ENCODE measurements at regions of chr5 and their contacts with region 1.

Region 1: DNA sequence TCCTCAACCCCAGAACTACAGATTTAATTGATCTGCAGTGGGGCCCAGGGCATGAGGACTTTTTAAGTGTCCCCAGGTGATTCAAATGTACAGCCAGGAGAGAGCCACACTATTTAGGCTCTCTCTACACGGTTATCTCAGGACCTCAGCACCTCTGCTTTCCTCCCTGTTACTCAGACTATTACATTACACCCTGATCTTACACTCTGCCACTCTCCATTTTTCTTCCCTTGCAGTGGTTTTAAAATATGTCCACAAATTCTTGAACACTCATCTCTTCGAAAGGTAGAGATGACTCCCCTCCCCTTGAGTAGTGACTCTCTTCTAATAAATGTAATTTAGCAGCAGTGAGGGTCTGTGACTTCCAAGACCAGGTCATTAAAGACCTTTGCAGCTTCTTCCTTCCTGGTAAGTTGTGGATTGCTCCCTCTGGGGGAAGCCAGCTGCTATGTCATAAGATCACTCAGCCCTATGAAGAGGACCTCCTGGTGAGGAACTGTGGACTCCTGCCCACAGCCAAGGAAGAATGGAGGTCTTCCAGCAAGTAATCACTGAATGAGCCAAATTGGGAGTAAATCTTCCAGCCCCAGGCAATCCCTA is 87.5 kb upstream of the SSBP2 start:
- DNase-seq: no peak
- H3K4me3 ChIP-seq: no peak overlapping the region
- H3K27ac ChIP-seq: no peak overlapping the region
- H3K4me1 ChIP-seq: peaks cover 3% of the 10 kb centered on the region
- H3K27me3 ChIP-seq: no peaks in the 10 kb centered on the region
- CTCF ChIP-seq: peak; percentile 40 to 69

Region 2: GRCh38 chr5:81425569-81425968 is 412.8 kb before region 1 on chr5:
- CTCF ChIA-PET with region 1: interaction called, 7 read pairs
- dilution Hi-C with region 1: no loop called
- in situ Hi-C with region 1: no loop called
- intact Hi-C with region 1: loop called (anchors 5 kb)
- DNase-seq: peak; percentile 27
- H3K4me3 ChIP-seq: no peak overlapping the region
- H3K27ac ChIP-seq: no peak overlapping the region
- H3K4me1 ChIP-seq: peaks cover 7% of the 10 kb centered on the region
- H3K27me3 ChIP-seq: no peaks in the 10 kb centered on the region
- CTCF ChIP-seq: peak; percentile 44 to 48

Region 3: DNA sequence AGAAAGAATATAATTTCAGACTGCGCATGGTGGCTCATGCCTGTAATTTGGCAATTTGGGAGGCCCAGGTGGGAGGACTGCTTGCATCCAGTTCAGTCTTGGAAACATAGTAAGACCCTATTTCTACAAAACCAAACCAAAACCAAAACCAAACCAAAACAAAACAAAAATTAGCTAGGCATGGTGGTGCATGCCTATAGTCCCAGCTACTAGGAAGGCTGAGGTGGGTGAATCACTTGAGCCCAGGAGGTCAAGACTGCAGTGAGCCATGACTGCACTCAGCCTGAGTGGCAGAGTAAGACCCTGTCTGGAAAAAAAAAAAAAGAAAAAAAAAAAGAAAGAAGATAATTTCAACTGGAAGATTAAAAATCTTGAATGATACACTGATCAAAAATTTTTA is 307.5 kb before region 1 on chr5:
- CTCF ChIA-PET with region 1: no interaction called
- dilution Hi-C with region 1: no loop called
- in situ Hi-C with region 1: no loop called
- intact Hi-C with region 1: no loop called
- DNase-seq: peak; percentile 20
- H3K4me3 ChIP-seq: no peak overlapping the region
- H3K27ac ChIP-seq: no peak overlapping the region
- H3K4me1 ChIP-seq: no peaks in the 10 kb centered on the region
- H3K27me3 ChIP-seq: no peaks in the 10 kb centered on the region
- CTCF ChIP-seq: no peak

Region 4: DNA sequence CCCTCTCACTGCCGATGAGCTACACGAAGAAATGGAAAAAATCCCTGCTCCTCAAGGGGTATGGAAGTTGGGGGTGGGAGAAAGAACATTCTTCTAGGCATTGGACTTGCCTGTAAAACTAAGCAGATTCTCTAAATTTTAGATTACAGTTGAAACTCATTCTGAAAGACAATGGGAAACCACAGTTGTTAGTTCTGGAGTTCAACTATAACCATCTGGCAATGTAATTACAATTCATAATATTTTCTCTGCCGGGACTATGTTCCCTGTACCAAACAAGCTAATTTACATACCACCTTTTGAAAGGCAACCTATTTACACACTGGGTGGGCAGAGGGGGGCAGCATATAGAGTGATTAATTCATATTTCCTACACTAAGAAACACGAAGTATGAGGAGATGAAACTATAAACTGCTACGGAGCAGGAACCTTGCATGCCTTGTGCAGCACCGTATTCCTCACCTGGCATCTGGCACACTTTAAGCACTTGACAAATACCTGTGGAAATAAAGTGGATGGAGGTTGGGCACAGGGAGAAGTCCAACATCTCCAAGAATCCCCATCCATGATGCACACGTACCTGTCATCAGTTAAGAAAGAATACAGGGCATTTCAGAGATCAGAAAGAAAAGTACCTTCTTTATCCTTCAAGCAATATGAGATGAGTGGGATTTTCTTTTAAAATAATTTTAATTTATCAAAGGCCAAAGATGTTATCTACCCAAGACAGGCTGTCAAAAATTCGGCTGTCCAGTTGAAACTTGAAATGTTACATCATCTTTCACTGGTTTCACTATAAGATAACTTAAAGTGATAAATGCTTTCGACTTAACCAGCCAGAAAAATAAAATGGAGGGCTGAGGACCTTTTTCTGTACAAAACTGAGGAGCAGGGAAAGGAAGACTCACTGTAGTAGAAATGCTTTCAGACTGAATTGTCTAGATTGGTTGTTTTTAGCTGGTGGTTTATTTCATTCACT is 141.7 kb before region 1 on chr5:
- CTCF ChIA-PET with region 1: no interaction called
- dilution Hi-C with region 1: no loop called
- in situ Hi-C with region 1: no loop called
- intact Hi-C with region 1: no loop called
- DNase-seq: no peak
- H3K4me3 ChIP-seq: no peak overlapping the region
- H3K27ac ChIP-seq: no peak overlapping the region
- H3K4me1 ChIP-seq: no peaks in the 10 kb centered on the region
- H3K27me3 ChIP-seq: no peaks in the 10 kb centered on the region
- CTCF ChIP-seq: no peak

Measured in mammary epithelial cell (primary cell).